ENCODE measurements at regions of chr4 and their contacts with region 1.

Region 1: DNA sequence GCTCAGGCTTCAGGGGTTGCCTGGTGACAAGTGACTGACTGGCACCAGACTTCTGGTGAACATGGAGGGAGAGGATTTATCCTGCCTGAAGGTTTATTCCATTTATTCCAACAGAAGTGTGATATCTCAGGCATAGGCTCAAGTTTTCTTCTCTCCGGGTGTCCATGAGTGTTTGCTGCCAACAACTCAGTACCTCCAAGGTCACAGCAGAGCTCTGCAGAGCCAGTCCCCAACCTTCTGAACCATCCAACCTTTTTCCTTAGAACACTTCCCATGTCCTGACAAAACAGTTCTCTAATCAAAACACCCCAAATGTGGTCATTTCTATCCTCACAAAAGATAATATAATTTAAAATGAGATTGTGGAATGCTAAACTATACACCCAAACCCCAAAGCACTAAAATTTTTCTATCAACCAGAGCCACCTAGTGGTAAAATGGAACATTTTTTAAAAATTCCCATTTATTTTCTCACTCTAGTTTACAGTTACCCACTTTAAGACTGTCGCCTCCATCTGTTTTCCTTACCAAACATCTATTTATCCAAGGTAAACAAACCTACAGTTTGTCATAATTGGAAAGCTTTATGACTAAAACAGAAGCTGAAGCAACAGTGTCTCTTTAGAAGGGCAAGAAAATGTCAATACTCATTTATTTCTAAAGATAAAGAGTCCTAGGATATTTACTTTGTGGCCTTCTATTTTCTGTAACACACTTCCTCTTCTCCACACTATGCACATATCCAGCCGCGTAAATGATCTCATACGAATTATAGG is 39.6 kb downstream of the TMEM154 start:
- DNase-seq: peak in 6 of 9 donors; percentile 14 to 51 (median 34)
- ATAC-seq: no peak
- H3K4me3 ChIP-seq: no peak overlapping the region
- H3K4me3 Mint-ChIP-seq: no peak overlapping the region
- H3K27ac ChIP-seq: no peak overlapping the region
- H3K27ac Mint-ChIP-seq: peak overlapping the region in 3 of 9 donors; percentile 2 to 63 (median 20)
- H3K4me1 ChIP-seq: peaks cover 0 to 15% of the 10 kb centered on the region in 2 donors
- H3K4me1 Mint-ChIP-seq: peaks cover 0 to 31% (median 9%) of the 10 kb centered on the region in 7 donors
- H3K27me3 ChIP-seq: no peaks in the 10 kb centered on the region
- H3K27me3 Mint-ChIP-seq: no peaks in the 10 kb centered on the region

Region 2: GRCh38 chr4:151117371-151117962 is 1522.8 kb before region 1 on chr4:
- CTCF ChIA-PET with region 1: no interaction called
- POLR2A ChIA-PET with region 1: no interaction called
- intact Hi-C with region 1: loop called in 1 of 2 experiments (anchors 1 kb)
- DNase-seq: peak in 8 of 9 donors; percentile 22 to 63 (median 54)
- ATAC-seq: peak; percentile 86
- H3K4me3 ChIP-seq: no peak overlapping the region
- H3K4me3 Mint-ChIP-seq: no peak overlapping the region
- H3K27ac ChIP-seq: no peak overlapping the region
- H3K27ac Mint-ChIP-seq: peak overlapping the region in 1 of 9 donors; percentile 59
- H3K4me1 ChIP-seq: no peaks in the 10 kb centered on the region
- H3K4me1 Mint-ChIP-seq: peaks cover 0 to 8% (median 6%) of the 10 kb centered on the region in 7 donors
- H3K27me3 ChIP-seq: no peaks in the 10 kb centered on the region
- H3K27me3 Mint-ChIP-seq: no peaks in the 10 kb centered on the region

Region 3: DNA sequence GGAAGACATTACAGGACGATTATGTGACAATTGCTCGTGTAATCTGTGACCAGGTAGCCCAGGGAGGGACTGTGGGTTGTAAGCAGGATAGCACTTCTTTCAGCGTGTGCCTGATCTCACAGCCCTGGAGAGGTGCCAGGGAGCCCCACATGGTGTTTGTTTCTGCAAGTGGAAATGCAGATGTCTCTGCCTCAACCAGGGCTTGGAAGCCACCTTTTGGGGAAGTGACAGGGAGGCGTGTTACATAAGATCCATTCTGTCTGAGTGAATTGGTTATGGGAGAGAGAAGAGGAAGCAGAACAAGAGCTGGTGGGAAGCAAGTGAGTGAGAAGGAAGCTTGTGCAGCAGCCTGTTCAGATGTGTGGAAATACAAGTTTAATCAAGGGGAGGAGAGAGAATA is 774.9 kb before region 1 on chr4:
- CTCF ChIA-PET with region 1: no interaction called
- POLR2A ChIA-PET with region 1: no interaction called
- intact Hi-C with region 1: no loop called
- DNase-seq: no peak
- ATAC-seq: peak; percentile 77
- H3K4me3 ChIP-seq: no peak overlapping the region
- H3K4me3 Mint-ChIP-seq: peak overlapping the region in 1 of 10 donors; percentile 6
- H3K27ac ChIP-seq: no peak overlapping the region
- H3K27ac Mint-ChIP-seq: peak overlapping the region in 1 of 9 donors; percentile 34
- H3K4me1 ChIP-seq: no peaks in the 10 kb centered on the region
- H3K4me1 Mint-ChIP-seq: peaks cover 2 to 20% (median 15%) of the 10 kb centered on the region in 7 donors
- H3K27me3 ChIP-seq: no peaks in the 10 kb centered on the region
- H3K27me3 Mint-ChIP-seq: peaks cover 0 to 19% (median 0%) of the 10 kb centered on the region in 5 donors

Region 4: DNA sequence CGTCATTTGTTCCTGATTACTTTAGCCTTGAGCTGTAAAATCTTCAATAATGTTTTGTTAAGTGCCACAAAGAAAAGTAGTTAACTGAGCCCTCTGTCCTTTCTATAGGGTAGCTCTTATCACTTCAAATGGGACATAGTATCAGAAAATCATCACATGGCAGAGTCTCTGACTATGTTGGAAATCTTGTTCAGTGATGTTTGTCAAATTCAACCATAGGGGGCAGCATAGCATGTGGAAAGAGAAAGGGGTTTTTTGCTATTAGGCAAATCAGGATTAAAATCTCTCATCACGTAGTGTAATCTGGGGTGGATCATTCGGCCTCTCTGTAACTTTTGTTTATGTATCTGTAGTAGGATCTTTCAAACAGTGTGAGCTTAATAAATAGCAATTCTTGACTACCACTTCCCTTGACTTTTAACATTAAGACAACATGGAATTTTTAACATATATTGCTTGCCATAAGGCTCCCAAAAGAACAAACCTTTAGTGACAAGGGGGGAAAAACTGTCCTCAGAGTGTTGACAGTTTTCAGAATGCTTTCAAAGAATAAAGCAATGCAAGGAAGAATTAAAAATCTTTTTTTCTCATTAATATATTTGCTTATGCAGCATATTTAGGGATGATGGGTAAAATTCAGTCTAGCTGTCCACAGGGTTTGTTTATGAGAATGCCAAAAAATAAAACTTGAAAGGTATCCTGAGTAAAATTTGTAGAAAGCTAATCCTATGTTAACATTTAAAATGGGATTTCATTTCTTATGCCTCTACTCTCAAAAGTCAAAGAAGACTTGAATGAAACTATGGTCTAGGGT is 231.5 kb before region 1 on chr4:
- CTCF ChIA-PET with region 1: interaction called, 4 read pairs
- POLR2A ChIA-PET with region 1: no interaction called
- intact Hi-C with region 1: loop called (anchors 1 kb)
- DNase-seq: peak in 6 of 9 donors; percentile 7 to 29 (median 21)
- ATAC-seq: peak; percentile 77
- H3K4me3 ChIP-seq: no peak overlapping the region
- H3K4me3 Mint-ChIP-seq: no peak overlapping the region
- H3K27ac ChIP-seq: no peak overlapping the region
- H3K27ac Mint-ChIP-seq: no peak overlapping the region
- H3K4me1 ChIP-seq: no peaks in the 10 kb centered on the region
- H3K4me1 Mint-ChIP-seq: peaks cover 2 to 20% (median 11%) of the 10 kb centered on the region in 7 donors
- H3K27me3 ChIP-seq: no peaks in the 10 kb centered on the region
- H3K27me3 Mint-ChIP-seq: no peaks in the 10 kb centered on the region

Region 5: GRCh38 chr4:152454398-152455011 is 185.7 kb before region 1 on chr4:
- CTCF ChIA-PET with region 1: interaction called, 6 read pairs
- POLR2A ChIA-PET with region 1: interaction called, 8 read pairs
- intact Hi-C with region 1: loop called (anchors 1 kb)
- DNase-seq: peak in 2 of 9 donors; percentile 6 to 7
- ATAC-seq: no peak
- H3K4me3 ChIP-seq: no peak overlapping the region
- H3K4me3 Mint-ChIP-seq: no peak overlapping the region
- H3K27ac ChIP-seq: no peak overlapping the region
- H3K27ac Mint-ChIP-seq: no peak overlapping the region
- H3K4me1 ChIP-seq: peaks cover 5 to 9% of the 10 kb centered on the region in 2 donors
- H3K4me1 Mint-ChIP-seq: peaks cover 30 to 53% (median 41%) of the 10 kb centered on the region in 7 donors
- H3K27me3 ChIP-seq: no peaks in the 10 kb centered on the region
- H3K27me3 Mint-ChIP-seq: no peaks in the 10 kb centered on the region

Region 6: DNA sequence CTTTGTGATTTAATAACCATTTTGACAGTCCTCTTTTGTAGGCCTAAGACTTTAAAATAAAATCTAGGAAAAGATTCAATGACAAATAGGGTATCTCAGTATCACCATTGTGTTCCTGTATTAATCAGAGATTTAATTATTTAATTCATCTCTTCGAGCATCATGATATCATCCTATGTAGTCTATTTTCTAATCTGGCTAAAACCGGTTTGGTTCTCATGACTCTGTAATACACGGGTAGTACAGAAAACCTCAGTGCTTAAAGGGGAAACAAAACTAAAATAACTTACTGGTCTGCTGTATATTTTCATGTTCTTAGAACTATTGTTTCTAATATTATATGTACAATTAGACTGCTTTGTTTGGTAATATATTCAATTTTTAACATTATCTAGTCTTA is 80.6 kb before region 1 on chr4:
- CTCF ChIA-PET with region 1: no interaction called
- POLR2A ChIA-PET with region 1: no interaction called
- intact Hi-C with region 1: loop called in 1 of 2 experiments (anchors 5 kb)
- DNase-seq: no peak
- ATAC-seq: no peak
- H3K4me3 ChIP-seq: no peak overlapping the region
- H3K4me3 Mint-ChIP-seq: no peak overlapping the region
- H3K27ac ChIP-seq: no peak overlapping the region
- H3K27ac Mint-ChIP-seq: no peak overlapping the region
- H3K4me1 ChIP-seq: peaks cover 3 to 5% of the 10 kb centered on the region in 2 donors
- H3K4me1 Mint-ChIP-seq: peaks cover 7 to 35% (median 21%) of the 10 kb centered on the region in 7 donors
- H3K27me3 ChIP-seq: no peaks in the 10 kb centered on the region
- H3K27me3 Mint-ChIP-seq: no peaks in the 10 kb centered on the region

Region 7: DNA sequence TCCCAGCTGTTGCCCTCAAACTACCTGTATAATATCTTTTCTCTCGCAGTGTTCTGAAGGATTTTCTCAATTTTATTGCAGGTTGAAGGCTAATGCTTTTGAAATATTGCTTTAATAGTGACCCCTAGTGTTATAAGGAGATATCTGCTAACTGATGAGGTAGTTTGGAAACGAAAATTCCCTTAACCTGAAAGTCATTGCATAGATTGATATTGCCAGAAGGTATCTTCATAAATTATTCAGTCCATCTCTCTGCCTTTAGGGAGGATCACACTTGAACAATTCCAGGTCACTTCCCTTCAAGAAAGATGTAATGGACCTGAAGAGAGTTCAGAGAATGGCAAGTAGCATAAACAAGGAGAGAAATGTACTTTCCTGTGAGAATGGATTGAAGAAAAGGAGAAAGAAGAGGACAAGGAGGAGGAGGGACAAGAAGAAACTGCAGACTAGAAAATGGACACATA is 95.2 kb after region 1 on chr4:
- CTCF ChIA-PET with region 1: interaction called, 7 read pairs
- POLR2A ChIA-PET with region 1: no interaction called
- intact Hi-C with region 1: loop called (anchors 1 to 2 kb)
- DNase-seq: peak in 6 of 9 donors; percentile 2 to 33 (median 26)
- ATAC-seq: peak; percentile 49
- H3K4me3 ChIP-seq: no peak overlapping the region
- H3K4me3 Mint-ChIP-seq: no peak overlapping the region
- H3K27ac ChIP-seq: no peak overlapping the region
- H3K27ac Mint-ChIP-seq: no peak overlapping the region
- H3K4me1 ChIP-seq: no peaks in the 10 kb centered on the region
- H3K4me1 Mint-ChIP-seq: peaks cover 0 to 7% (median 0%) of the 10 kb centered on the region in 7 donors
- H3K27me3 ChIP-seq: no peaks in the 10 kb centered on the region
- H3K27me3 Mint-ChIP-seq: peaks cover 0 to 6% (median 4%) of the 10 kb centered on the region in 5 donors

Region 8: GRCh38 chr4:152785639-152786615 is 145.7 kb after region 1 on chr4:
- CTCF ChIA-PET with region 1: no interaction called
- POLR2A ChIA-PET with region 1: no interaction called
- intact Hi-C with region 1: no loop called
- DNase-seq: no peak
- ATAC-seq: peak; percentile 18
- H3K4me3 ChIP-seq: no peak overlapping the region
- H3K4me3 Mint-ChIP-seq: peak overlapping the region; percentile 4 to 76 (median 58)
- H3K27ac ChIP-seq: peak overlapping the region; percentile 37
- H3K27ac Mint-ChIP-seq: peak overlapping the region; percentile 62 to 86 (median 74)
- H3K4me1 ChIP-seq: peaks cover 6 to 15% of the 10 kb centered on the region in 2 donors
- H3K4me1 Mint-ChIP-seq: peaks cover 32 to 58% (median 41%) of the 10 kb centered on the region in 7 donors
- H3K27me3 ChIP-seq: no peaks in the 10 kb centered on the region
- H3K27me3 Mint-ChIP-seq: no peaks in the 10 kb centered on the region

Region 9: GRCh38 chr4:152972821-152973628 is 332.8 kb after region 1 on chr4:
- CTCF ChIA-PET with region 1: no interaction called
- POLR2A ChIA-PET with region 1: no interaction called
- intact Hi-C with region 1: no loop called
- DNase-seq: no peak
- ATAC-seq: no peak
- H3K4me3 ChIP-seq: no peak overlapping the region
- H3K4me3 Mint-ChIP-seq: no peak overlapping the region
- H3K27ac ChIP-seq: no peak overlapping the region
- H3K27ac Mint-ChIP-seq: peak overlapping the region in 1 of 9 donors; percentile 55
- H3K4me1 ChIP-seq: no peaks in the 10 kb centered on the region
- H3K4me1 Mint-ChIP-seq: no peaks in the 10 kb centered on the region
- H3K27me3 ChIP-seq: no peaks in the 10 kb centered on the region
- H3K27me3 Mint-ChIP-seq: no peaks in the 10 kb centered on the region

Region 10: DNA sequence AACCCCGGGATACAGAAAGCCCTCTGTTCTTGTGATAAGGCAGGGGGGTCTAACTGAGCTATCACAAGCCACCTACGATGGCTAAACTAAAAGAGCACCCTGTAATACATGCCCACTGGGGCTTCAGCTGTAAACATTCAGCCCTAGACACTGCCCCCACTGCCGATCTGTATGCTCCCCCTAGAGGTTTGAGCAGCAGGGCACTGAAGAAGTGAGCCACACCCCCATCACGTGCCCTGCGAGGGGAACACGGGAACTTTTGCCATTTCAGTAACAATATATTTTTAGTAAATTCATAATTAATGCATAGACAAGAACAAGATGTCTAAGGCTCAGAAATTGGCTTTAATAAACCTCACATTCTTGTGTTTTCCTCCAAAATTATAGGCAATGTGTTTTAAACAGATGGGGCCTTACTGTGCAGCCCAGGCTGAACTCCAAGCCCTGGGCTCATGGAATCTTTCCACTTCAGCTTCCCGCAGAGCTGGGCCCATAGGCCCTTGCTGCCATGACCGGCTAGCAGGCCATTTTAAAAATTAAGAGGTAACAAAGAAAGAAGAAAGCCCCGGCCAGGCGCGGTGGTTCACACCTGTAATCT is 1384.0 kb after region 1 on chr4:
- CTCF ChIA-PET with region 1: no interaction called
- POLR2A ChIA-PET with region 1: no interaction called
- intact Hi-C with region 1: no loop called
- DNase-seq: peak in 2 of 9 donors; percentile 1 to 5
- ATAC-seq: no peak
- H3K4me3 ChIP-seq: no peak overlapping the region
- H3K4me3 Mint-ChIP-seq: no peak overlapping the region
- H3K27ac ChIP-seq: no peak overlapping the region
- H3K27ac Mint-ChIP-seq: no peak overlapping the region
- H3K4me1 ChIP-seq: no peaks in the 10 kb centered on the region
- H3K4me1 Mint-ChIP-seq: no peaks in the 10 kb centered on the region
- H3K27me3 ChIP-seq: no peaks in the 10 kb centered on the region
- H3K27me3 Mint-ChIP-seq: peaks cover 2 to 35% (median 26%) of the 10 kb centered on the region in 5 donors